Mammary epithelial cell (primary cell): ENCODE measurements at regions of chr5 and their contacts with region 1.

Region 1: GRCh38 chr5:150350524-150351344 is 6.8 kb upstream of the TCOF1 start:
- DNase-seq: peak; percentile 55
- H3K4me3 ChIP-seq: no peak overlapping the region
- H3K27ac ChIP-seq: no peak overlapping the region
- H3K4me1 ChIP-seq: peaks cover 10% of the 10 kb centered on the region
- H3K27me3 ChIP-seq: no peaks in the 10 kb centered on the region
- CTCF ChIP-seq: peak; percentile 57 to 84

Region 2: GRCh38 chr5:150129813-150130492 is 220.8 kb before region 1 on chr5:
- CTCF ChIA-PET with region 1: interaction called, 3 read pairs
- dilution Hi-C with region 1: no loop called
- in situ Hi-C with region 1: no loop called
- intact Hi-C with region 1: loop called (anchors 1 kb)
- DNase-seq: peak; percentile 59
- H3K4me3 ChIP-seq: peak overlapping the region in 1 of 3 experiments; percentile 35
- H3K27ac ChIP-seq: no peak overlapping the region
- H3K4me1 ChIP-seq: peaks cover 17% of the 10 kb centered on the region
- H3K27me3 ChIP-seq: no peaks in the 10 kb centered on the region
- CTCF ChIP-seq: peak; percentile 95 to 98

Region 3: GRCh38 chr5:150161242-150162141 is 189.2 kb before region 1 on chr5:
- CTCF ChIA-PET with region 1: interaction called, 8 read pairs
- dilution Hi-C with region 1: no loop called
- in situ Hi-C with region 1: loop called in 1 of 2 experiments (anchors 25 kb)
- intact Hi-C with region 1: loop called (anchors 1 kb)
- DNase-seq: peak; percentile 55
- H3K4me3 ChIP-seq: no peak overlapping the region
- H3K27ac ChIP-seq: no peak overlapping the region
- H3K4me1 ChIP-seq: no peaks in the 10 kb centered on the region
- H3K27me3 ChIP-seq: no peaks in the 10 kb centered on the region
- CTCF ChIP-seq: peak; percentile 96 to 98

Region 4: GRCh38 chr5:150272526-150272925 is 78.2 kb before region 1 on chr5:
- CTCF ChIA-PET with region 1: interaction called, 14 read pairs
- dilution Hi-C with region 1: no loop called
- in situ Hi-C with region 1: loop called (anchors 10 kb)
- intact Hi-C with region 1: loop called (anchors 1 kb)
- DNase-seq: peak; percentile 46
- H3K4me3 ChIP-seq: no peak overlapping the region
- H3K27ac ChIP-seq: no peak overlapping the region
- H3K4me1 ChIP-seq: peaks cover 5% of the 10 kb centered on the region
- H3K27me3 ChIP-seq: no peaks in the 10 kb centered on the region
- CTCF ChIP-seq: peak; percentile 53 to 78

Region 5: DNA sequence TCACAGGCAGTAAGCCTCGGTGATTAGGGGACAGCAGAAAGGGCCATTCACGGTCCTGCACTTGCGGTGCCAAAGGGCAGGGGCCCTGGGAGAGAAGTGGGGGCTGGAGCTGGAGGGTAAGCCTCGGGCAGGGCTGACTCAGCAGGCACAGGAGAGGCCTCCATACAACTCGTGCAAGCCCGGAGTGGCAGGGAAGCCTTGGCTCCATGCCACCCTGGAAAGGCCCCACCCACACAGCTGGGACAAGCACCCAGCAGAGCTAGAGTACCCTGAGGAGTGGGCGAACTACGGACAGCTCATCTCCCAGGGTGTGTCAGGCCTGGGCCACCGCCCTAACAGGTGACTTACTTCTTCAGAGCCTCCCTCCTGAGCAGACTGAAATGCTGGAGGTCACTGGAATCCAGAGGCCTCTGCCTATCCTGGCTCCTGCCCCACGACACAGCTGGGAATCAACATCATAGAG is 55.5 kb before region 1 on chr5:
- CTCF ChIA-PET with region 1: interaction called, 5 read pairs
- dilution Hi-C with region 1: no loop called
- in situ Hi-C with region 1: no loop called
- intact Hi-C with region 1: loop called (anchors 1 kb)
- DNase-seq: peak; percentile 93
- H3K4me3 ChIP-seq: no peak overlapping the region
- H3K27ac ChIP-seq: peak overlapping the region; percentile 87
- H3K4me1 ChIP-seq: peaks cover 68% of the 10 kb centered on the region
- H3K27me3 ChIP-seq: no peaks in the 10 kb centered on the region
- CTCF ChIP-seq: no peak

Region 6: GRCh38 chr5:150320048-150320555 is 30.6 kb before region 1 on chr5:
- CTCF ChIA-PET with region 1: interaction called, 3 read pairs
- dilution Hi-C with region 1: no loop called
- in situ Hi-C with region 1: no loop called
- intact Hi-C with region 1: loop called (anchors 1 kb)
- DNase-seq: peak; percentile 87
- H3K4me3 ChIP-seq: no peak overlapping the region
- H3K27ac ChIP-seq: peak overlapping the region; percentile 92
- H3K4me1 ChIP-seq: peaks cover 64% of the 10 kb centered on the region
- H3K27me3 ChIP-seq: no peaks in the 10 kb centered on the region
- CTCF ChIP-seq: no peak